Adrenal gland (tissue), 19 donors: ENCODE measurements at regions of chr17 and their contacts with region 1.

Region 1: GRCh38 chr17:5191541-5192417 is at the start of gene ZNF594:
- DNase-seq: peak; percentile 95 to 98 (median 97)
- H3K4me3 ChIP-seq: peak within 1 kb of the TSS; percentile 31 to 88 (median 62)
- H3K27ac ChIP-seq: peak within 1 kb of the TSS in 3 of 5 donors; percentile 63 to 79 (median 72)
- H3K4me1 ChIP-seq: peaks cover 12 to 17% of the 10 kb centered on the region in 2 donors
- H3K27me3 ChIP-seq: no peaks in the 10 kb centered on the region
- CTCF ChIP-seq: peak; percentile 55 to 74 (median 64)
- POLR2A ChIP-seq: peak; percentile 49 to 66
- total RNA-seq, gene ZNF594: 0.72 to 16.4 (median 5.6) TPM

Region 2: DNA sequence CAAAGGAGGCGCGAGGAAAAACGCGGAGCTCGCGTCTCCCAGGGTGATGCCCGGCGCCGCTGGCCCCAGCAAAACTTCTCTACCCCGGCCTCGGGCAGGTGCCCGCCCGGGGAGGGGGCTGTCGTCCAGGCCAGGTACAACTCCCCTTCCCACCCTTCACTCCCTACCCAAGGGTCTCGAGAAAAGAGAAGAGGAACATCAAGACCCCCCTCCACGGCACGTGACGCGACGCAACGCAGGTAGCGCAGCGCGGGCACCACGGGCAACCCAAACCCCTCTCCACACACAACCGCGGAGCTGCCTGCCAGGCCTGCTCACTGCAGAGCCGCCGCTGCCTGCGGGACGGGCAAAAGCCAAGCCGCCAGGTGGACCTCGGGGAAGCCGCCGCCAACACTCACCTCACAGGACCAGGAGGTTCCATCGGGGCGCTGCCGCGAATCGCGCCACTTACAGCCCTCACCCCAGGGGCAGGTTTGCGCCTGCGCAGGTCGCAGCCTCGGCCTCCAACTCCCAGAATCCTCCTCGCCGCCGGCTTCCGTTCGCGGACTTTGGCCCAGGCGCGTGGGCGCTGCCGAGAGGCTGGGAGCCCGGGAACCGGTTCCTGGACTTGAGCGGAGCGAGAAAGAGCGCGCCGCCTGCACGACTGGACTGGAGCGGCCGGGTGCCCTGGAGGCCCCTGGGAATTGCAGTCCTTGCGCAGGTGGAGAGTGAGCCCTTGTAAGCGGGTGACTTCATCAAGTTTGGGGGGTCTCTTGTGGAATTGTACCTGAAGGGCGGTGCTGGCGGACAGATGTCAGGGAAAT is 80.2 kb before region 1 on chr17 and contains the start of gene ZNF232:
- intact Hi-C with region 1: loop called in 1 of 2 experiments (anchors 5 kb)
- DNase-seq: peak; percentile 92 to 95 (median 94)
- H3K4me3 ChIP-seq: peak within 1 kb of the TSS; percentile 56 to 79 (median 74)
- H3K27ac ChIP-seq: peak within 1 kb of the TSS in 4 of 5 donors; percentile 1 to 74 (median 46)
- H3K4me1 ChIP-seq: peaks cover 0 to 7% of the 10 kb centered on the region in 2 donors
- H3K27me3 ChIP-seq: peaks cover 15% of the 10 kb centered on the region
- CTCF ChIP-seq: no peak
- POLR2A ChIP-seq: peak in 1 of 2 donors; percentile 62
- total RNA-seq, gene ZNF232: 3.6 to 10.3 (median 6.6) TPM